Right ventricle myocardium superior (tissue), 1 donor: ENCODE measurements at regions of chr11 and their contacts with region 1.

Region 1: DNA sequence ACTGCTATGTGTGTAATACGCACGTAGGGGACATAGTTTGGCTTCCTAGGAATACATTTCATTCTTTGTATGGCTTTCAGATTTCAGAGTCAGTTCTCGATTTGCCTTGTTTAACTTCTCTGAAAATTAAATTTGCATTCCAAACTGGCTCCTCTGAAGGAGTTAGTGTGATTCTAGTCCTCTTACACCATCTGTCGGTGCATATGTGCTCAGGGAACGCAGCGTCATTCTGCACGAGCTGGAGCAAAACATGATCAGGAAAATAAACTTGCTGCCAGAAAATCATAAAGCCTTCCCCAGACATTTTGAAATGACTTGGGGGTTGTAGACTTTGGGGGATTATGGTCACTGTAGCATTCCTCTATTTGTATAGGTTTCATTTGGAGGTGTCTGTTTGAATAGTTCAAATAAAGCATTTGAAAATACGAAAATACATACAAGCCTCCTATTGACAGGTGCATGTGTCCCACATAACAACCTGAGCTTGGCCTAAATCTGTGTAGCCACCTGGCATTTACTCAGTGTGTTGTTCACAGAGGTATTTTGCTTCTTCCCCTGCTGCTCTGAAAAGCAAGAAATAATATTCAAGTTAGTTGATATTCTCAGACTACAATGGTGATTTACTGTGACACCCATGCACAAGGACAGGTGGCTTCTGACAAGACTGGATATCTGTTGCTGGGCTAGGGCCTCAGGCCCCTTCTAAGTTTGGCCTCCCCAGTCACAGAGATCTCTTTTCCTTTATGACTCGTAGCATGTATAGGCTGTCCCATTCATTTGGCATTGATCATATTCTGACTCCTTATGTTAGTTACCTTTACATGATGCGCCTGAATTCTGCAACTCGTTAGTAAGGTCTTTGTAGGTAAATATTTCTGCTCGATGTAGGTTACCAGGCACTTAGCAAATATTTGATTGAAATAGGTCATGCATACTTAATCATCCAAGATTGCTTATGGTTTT is 81.6 kb upstream of the SORL1-AS1 start:
- DNase-seq: no peak
- ATAC-seq: peak; percentile 66

Region 2: DNA sequence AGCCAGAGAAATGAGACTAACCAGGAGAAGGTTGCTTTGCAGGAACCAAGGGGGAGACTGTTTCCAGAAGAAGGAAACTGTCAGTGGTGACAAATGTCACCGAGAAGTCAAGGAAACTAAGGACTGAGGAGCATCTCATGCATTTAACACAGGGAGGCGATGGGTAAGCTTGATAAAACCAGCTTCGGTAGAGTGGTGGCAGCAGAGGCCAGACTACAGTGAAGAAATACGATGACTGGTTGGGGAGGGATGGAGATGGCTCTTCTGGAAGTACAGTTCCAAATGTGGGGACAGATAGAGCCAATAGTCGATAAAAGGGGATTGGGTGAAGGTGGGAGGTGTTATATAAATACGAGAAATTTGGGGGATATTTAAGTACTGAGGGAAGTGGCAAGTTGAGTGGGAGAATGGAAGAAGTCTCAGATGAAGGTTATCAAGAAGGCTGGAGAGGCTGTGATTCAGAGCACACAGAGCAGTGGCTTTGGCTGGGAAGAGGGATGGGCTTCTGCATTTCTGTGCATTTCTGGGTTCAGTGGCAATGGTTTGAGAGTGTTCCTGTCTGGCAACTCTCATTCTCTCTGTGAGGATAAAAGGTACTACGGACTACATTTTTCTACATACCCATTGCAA is 212.7 kb before region 1 on chr11:
- intact Hi-C with region 1: loop called (anchors 2 kb)
- DNase-seq: no peak
- ATAC-seq: peak; percentile 87

Region 3: GRCh38 chr11:121451986-121452608 is 82.3 kb before region 1 on chr11 and contains the start of gene SORL1:
- intact Hi-C with region 1: loop called (anchors 5 kb)
- DNase-seq: peak; percentile 85
- ATAC-seq: peak; percentile 97
- total RNA-seq, gene SORL1: 4.7 TPM

Region 4: DNA sequence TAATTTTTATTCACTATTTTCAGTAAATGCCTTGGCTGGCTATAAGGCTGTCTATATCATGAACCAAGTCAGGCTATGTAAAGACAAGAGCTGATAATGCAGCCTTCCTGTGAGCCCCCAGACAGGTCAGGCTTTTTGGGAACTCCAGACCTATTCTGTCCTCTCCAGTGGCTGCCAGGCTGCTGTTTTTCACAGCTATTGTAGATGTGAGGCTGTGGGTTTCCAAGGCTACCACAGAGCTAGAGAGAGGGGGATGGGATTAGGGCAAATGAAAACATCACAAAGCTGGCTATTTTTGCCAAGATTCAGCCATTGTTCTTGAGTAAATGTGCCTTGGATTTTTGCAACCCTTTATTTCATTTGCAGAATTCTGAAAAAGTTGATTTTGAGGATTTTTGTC is 26.0 kb before region 1 on chr11:
- intact Hi-C with region 1: no loop called
- DNase-seq: no peak
- ATAC-seq: no peak

Region 5: DNA sequence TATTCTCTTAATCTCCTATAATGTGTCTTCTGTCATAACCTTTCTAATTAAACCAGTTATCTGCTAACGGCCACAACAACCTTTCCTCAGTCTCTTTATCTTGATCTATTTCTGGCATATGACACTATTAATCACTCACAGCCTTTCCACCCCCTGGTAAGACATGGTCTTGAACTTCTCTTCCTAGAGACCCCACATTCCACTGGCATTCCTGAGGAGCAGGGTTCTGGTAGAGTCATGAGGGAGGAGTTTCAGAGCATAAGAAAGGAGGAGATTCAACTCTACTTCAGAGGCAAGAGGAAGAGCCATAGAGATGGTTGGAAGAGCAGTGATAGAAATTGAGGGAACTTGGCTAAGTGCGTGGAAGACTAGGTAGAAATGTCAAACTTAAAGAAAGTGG is 256.0 kb after region 1 on chr11:
- intact Hi-C with region 1: no loop called
- DNase-seq: no peak
- ATAC-seq: no peak